Activated T-helper 1 cell treated with anti-CD3 and anti-CD28 coated beads, Interleukin-12 subunit alpha, Interleukin-12 subunit beta, Interleukin-2, Interleukin-4 antibody, amounts not matched to agents 30 ng/mL and 10 ng/mL and 1 ng/mL, durations not matched to agents 14 hours and 24 hours and 36 hours (primary cell): ENCODE measurements at regions of chr9 and their contacts with region 1.

Region 1: DNA sequence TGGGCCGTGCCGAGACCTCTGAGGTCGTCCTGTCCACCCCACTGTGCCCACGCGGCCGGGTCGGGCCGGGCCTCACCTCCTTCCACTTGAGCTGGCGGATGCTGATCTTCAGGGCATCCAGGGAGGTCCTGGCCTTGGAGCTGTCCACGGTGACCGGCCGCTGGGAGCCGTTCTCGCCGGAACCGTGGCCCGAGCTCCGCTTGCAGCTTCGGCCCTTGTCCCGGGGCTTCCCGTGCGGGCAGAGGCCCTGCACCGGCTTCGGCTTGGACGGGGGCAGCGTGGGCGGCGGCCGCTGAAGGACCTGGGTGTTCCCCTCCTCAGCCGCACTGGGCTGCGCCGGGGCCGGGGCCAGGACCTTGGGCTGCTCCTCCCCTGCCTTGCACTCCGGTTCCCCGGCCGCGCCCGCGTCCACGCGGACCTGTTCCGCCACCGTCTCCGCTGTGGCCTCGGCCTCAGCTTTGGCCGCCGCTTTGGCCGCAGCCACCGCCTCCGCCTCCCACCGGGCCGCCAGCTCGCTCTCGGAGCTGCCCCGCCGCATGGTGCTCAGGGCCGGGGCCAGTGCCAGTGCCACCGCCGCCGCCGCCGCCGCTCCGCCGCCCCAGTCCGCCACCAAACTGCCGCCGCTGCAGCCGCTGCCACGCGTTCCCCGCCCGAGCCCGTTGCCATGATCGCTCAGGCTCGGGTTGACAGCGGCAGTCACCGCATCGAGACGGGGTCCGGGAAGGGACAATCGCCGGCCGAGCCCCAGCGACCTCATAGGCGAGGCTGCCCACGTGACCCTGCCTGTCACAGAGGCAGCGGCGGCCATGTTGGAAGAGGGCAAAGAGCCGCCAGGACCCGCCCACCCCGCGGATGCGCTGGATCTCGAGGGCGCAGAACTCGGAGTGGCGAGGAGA is at the start of gene TTLL11:
- DNase-seq: peak; percentile 95
- H3K4me3 Mint-ChIP-seq: peak within 1 kb of the TSS; percentile 84
- H3K27ac Mint-ChIP-seq: peak within 1 kb of the TSS; percentile 73
- H3K4me1 Mint-ChIP-seq: peaks cover 25% of the 10 kb centered on the region
- H3K27me3 Mint-ChIP-seq: peaks cover 10% of the 10 kb centered on the region
- total RNA-seq, gene TTLL11: 3.0 and 4.5 TPM in 2 replicates

Region 2: GRCh38 chr9:120579750-120580590 is 1512.9 kb before region 1 on chr9 and contains the start of gene CDK5RAP2:
- intact Hi-C with region 1: loop called (anchors 2 kb)
- DNase-seq: peak; percentile 91
- H3K4me3 Mint-ChIP-seq: peak within 1 kb of the TSS; percentile 97
- H3K27ac Mint-ChIP-seq: peak within 1 kb of the TSS; percentile 95
- H3K4me1 Mint-ChIP-seq: peaks cover 54% of the 10 kb centered on the region
- H3K27me3 Mint-ChIP-seq: no peaks in the 10 kb centered on the region
- total RNA-seq, gene CDK5RAP2: 60.3 and 66.7 TPM in 2 replicates

Region 3: DNA sequence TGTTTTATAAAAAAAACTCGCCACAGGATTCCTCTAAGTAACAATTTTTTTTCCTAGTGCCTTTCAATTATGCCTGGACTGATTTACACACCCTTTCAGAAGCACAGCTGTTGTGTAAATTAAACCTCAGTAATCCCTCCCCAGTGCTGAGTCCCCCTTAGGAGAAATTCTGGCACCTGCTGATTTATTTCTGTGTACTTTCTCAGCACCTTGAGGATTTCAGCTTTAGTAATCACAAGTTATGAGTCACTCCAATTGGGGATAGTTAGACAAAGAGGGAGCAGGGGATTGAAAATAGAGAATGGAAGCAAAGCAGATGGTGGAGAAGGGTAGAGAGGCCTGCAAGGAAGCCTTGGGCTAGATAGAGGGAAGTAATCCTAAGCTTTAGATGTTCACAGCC is 171.4 kb before region 1 on chr9:
- intact Hi-C with region 1: no loop called
- DNase-seq: no peak
- H3K4me3 Mint-ChIP-seq: no peak overlapping the region
- H3K27ac Mint-ChIP-seq: no peak overlapping the region
- H3K4me1 Mint-ChIP-seq: no peaks in the 10 kb centered on the region
- H3K27me3 Mint-ChIP-seq: peaks cover 3% of the 10 kb centered on the region

Region 4: GRCh38 chr9:121944716-121945191 is 148.1 kb before region 1 on chr9:
- intact Hi-C with region 1: no loop called
- DNase-seq: no peak
- H3K4me3 Mint-ChIP-seq: no peak overlapping the region
- H3K27ac Mint-ChIP-seq: no peak overlapping the region
- H3K4me1 Mint-ChIP-seq: no peaks in the 10 kb centered on the region
- H3K27me3 Mint-ChIP-seq: peaks cover 3% of the 10 kb centered on the region

Region 5: GRCh38 chr9:122051351-122052321 is 41.2 kb before region 1 on chr9:
- intact Hi-C with region 1: loop called (anchors 2 kb)
- DNase-seq: no peak
- H3K4me3 Mint-ChIP-seq: no peak overlapping the region
- H3K27ac Mint-ChIP-seq: peak overlapping the region; percentile 82
- H3K4me1 Mint-ChIP-seq: peaks cover 9% of the 10 kb centered on the region
- H3K27me3 Mint-ChIP-seq: peaks cover 6% of the 10 kb centered on the region

Region 6: GRCh38 chr9:122213589-122214413 is 120.9 kb after region 1 on chr9:
- intact Hi-C with region 1: loop called (anchors 1 kb)
- DNase-seq: peak; percentile 59
- H3K4me3 Mint-ChIP-seq: peak overlapping the region; percentile 72
- H3K27ac Mint-ChIP-seq: no peak overlapping the region
- H3K4me1 Mint-ChIP-seq: peaks cover 18% of the 10 kb centered on the region
- H3K27me3 Mint-ChIP-seq: peaks cover 66% of the 10 kb centered on the region

Region 7: GRCh38 chr9:122350638-122351355 is 257.9 kb after region 1 on chr9:
- intact Hi-C with region 1: loop called (anchors 1 kb)
- DNase-seq: peak; percentile 63
- H3K4me3 Mint-ChIP-seq: no peak overlapping the region
- H3K27ac Mint-ChIP-seq: no peak overlapping the region
- H3K4me1 Mint-ChIP-seq: peaks cover 15% of the 10 kb centered on the region
- H3K27me3 Mint-ChIP-seq: peaks cover 27% of the 10 kb centered on the region

Region 8: GRCh38 chr9:122370869-122371755 is 278.3 kb after region 1 on chr9 and contains the start of gene PTGS1:
- intact Hi-C with region 1: no loop called
- DNase-seq: no peak
- H3K4me3 Mint-ChIP-seq: peak within 1 kb of the TSS; percentile 64
- H3K27ac Mint-ChIP-seq: no peak within 1 kb of the TSS
- H3K4me1 Mint-ChIP-seq: peaks cover 9% of the 10 kb centered on the region
- H3K27me3 Mint-ChIP-seq: peaks cover 14% of the 10 kb centered on the region
- total RNA-seq, gene PTGS1: 0.54 and 0.61 TPM in 2 replicates

Region 9: GRCh38 chr9:122904823-122905710 is 812.2 kb after region 1 on chr9 and contains the start of gene RC3H2:
- intact Hi-C with region 1: loop called (anchors 10 kb)
- DNase-seq: peak; percentile 97
- H3K4me3 Mint-ChIP-seq: peak within 1 kb of the TSS; percentile 95
- H3K27ac Mint-ChIP-seq: peak within 1 kb of the TSS; percentile 96
- H3K4me1 Mint-ChIP-seq: peaks cover 49% of the 10 kb centered on the region
- H3K27me3 Mint-ChIP-seq: no peaks in the 10 kb centered on the region
- total RNA-seq, gene RC3H2: 39.8 and 49.3 TPM in 2 replicates

Region 10: GRCh38 chr9:123338710-123339665 is 1246.1 kb after region 1 on chr9:
- intact Hi-C with region 1: loop called (anchors 5 kb)
- DNase-seq: peak; percentile 62
- H3K4me3 Mint-ChIP-seq: peak overlapping the region; percentile 83
- H3K27ac Mint-ChIP-seq: peak overlapping the region; percentile 93
- H3K4me1 Mint-ChIP-seq: peaks cover 40% of the 10 kb centered on the region
- H3K27me3 Mint-ChIP-seq: no peaks in the 10 kb centered on the region